ENCODE measurements at regions of chr7 and their contacts with region 1.

Region 1: DNA sequence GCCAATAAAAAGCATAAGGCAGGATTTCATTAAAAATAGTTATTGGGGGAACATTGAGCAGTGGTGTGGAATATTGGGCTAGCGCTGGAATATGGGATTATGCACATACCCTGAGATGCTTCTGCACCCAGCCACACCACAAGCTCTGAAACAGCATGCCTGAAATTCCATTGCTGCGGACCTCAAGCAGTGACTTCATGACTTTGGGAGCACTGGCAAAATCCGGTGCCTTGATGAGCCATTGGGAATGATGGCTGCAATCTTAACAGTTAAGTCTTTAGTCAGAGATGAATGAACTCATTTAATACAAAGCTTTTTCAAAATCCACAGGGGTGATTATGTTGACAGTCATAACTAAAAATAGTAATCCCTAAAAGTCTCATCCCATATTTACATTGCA is 274.7 kb upstream of the MTPN start:
- DNase-seq: no peak
- ATAC-seq: no peak
- H3K4me3 ChIP-seq: no peak overlapping the region
- H3K4me3 Mint-ChIP-seq: no peak overlapping the region
- H3K27ac ChIP-seq: no peak overlapping the region
- H3K27ac Mint-ChIP-seq: no peak overlapping the region
- H3K4me1 ChIP-seq: no peaks in the 10 kb centered on the region
- H3K4me1 Mint-ChIP-seq: no peaks in the 10 kb centered on the region
- H3K27me3 ChIP-seq: no peaks in the 10 kb centered on the region
- H3K27me3 Mint-ChIP-seq: no peaks in the 10 kb centered on the region
- CTCF ChIP-seq: no peak

Region 2: DNA sequence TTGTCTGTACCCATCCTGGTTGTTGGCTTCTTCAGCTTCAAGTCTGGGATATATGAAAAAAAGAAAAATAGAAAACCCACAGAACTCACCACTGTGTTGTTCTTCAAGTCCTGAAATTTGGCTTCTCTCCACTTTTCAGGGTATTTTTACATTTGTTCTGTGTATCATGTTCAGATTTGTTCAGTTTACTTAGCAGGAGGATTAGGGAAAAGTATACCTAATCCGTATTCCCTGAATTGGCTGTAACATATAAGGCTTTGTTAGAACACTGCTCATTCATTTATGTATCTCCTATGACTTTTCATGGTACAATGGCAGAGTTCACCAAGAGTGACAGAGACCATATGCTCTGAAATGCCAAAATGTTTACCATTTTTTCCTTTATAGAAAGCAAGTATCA is 944.8 kb after region 1 on chr7:
- CTCF ChIA-PET with region 1: no interaction called
- POLR2A ChIA-PET with region 1: no interaction called
- intact Hi-C with region 1: loop called in 1 of 2 experiments (anchors 5 kb)
- DNase-seq: no peak
- ATAC-seq: no peak
- H3K4me3 ChIP-seq: no peak overlapping the region
- H3K4me3 Mint-ChIP-seq: no peak overlapping the region
- H3K27ac ChIP-seq: no peak overlapping the region
- H3K27ac Mint-ChIP-seq: no peak overlapping the region
- H3K4me1 ChIP-seq: no peaks in the 10 kb centered on the region
- H3K4me1 Mint-ChIP-seq: no peaks in the 10 kb centered on the region
- H3K27me3 ChIP-seq: no peaks in the 10 kb centered on the region
- H3K27me3 Mint-ChIP-seq: no peaks in the 10 kb centered on the region
- CTCF ChIP-seq: no peak